Transverse colon (tissue), 4 donors: ENCODE measurements at regions of chr14 and their contacts with region 1.

Region 1: GRCh38 chr14:23727566-23728335 is 91.6 kb downstream of the DHRS2 start:
- DNase-seq: no peak
- H3K4me3 ChIP-seq: no peak overlapping the region
- H3K27ac ChIP-seq: no peak overlapping the region
- H3K4me1 ChIP-seq: no peaks in the 10 kb centered on the region
- H3K27me3 ChIP-seq: no peaks in the 10 kb centered on the region
- CTCF ChIP-seq: peak in 4 of 5 experiments; percentile 35 to 55 (median 40)
- EP300 ChIP-seq: no peak
- POLR2A ChIP-seq: no peak

Region 2: GRCh38 chr14:23910101-23910875 is 182.5 kb after region 1 on chr14:
- in situ Hi-C with region 1: loop called in 2 of 4 experiments (anchors 10 to 25 kb)
- intact Hi-C with region 1: no loop called
- DNase-seq: peak; percentile 54
- H3K4me3 ChIP-seq: no peak overlapping the region
- H3K27ac ChIP-seq: no peak overlapping the region
- H3K4me1 ChIP-seq: no peaks in the 10 kb centered on the region
- H3K27me3 ChIP-seq: no peaks in the 10 kb centered on the region
- CTCF ChIP-seq: peak; percentile 61 to 77 (median 74)
- EP300 ChIP-seq: no peak
- POLR2A ChIP-seq: no peak